Activated CD4-positive, alpha-beta T cell treated with anti-CD3 and anti-CD28 coated beads, Interleukin-2, amount 10 ng/mL, durations not matched to agents 24 days and 14 days (primary cell): ENCODE measurements at regions of chr2 and their contacts with region 1.

Region 1: DNA sequence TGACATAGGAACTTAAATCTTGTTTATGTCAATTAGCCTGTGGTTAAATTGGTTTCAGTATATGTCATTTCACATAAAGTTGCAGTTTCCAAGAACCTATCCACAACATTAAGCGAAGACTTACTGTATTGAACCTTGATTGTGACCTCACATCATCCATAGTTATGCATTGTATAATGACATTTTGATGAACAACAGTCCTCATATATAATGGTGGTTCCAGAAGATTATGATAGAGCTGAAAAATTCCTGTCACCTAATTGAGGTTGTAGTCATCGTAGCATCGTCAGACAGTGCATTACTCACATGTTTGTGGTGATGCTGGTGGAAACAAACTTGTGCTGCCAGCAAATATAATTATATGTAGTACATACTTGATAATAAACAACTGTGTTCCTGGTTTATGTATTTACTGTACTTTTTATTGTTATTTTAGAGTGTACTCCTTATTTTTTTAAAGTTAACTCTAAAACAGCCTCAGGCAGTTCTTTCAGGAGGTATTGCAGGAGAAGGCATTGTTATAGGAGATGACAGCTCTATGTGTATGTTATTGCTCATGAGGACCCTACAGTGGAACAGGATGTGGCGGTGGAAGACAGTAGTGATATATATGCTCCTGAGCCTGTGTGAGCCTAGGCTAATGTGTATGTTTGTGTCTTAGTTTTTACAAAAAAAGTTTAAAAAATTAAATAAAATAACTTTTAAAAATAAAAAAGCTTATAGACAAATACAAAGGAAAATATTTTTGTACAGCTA is 56.6 kb downstream of the UBE2E3 start:
- DNase-seq: peak; percentile 65
- H3K4me3 Mint-ChIP-seq: peak overlapping the region; percentile 16
- H3K27ac Mint-ChIP-seq: peak overlapping the region; percentile 48
- H3K4me1 Mint-ChIP-seq: peaks cover 19% of the 10 kb centered on the region
- H3K27me3 Mint-ChIP-seq: no peaks in the 10 kb centered on the region

Region 2: DNA sequence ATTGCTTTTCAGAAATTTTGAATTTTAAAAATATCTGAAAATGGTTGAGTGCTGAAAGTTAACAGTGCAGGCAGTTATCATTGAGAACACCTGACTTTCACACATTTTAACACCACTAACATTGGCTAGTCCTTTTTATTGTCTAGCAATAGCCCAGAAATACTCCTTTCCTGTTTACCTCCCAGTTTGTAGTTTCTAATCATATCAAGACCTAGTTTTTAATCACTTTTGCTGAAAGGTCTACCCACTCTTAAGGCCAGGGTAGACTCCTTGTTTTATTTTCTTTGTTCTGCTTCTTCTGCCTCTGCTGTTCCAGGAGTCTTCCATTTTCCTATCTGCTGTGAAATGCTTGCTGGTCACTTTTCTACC is 15.5 kb after region 1 on chr2:
- intact Hi-C with region 1: loop called (anchors 1 kb)
- DNase-seq: no peak
- H3K4me3 Mint-ChIP-seq: peak overlapping the region; percentile 2
- H3K27ac Mint-ChIP-seq: peak overlapping the region; percentile 20
- H3K4me1 Mint-ChIP-seq: peaks cover 17% of the 10 kb centered on the region
- H3K27me3 Mint-ChIP-seq: no peaks in the 10 kb centered on the region